ENCODE measurements at regions of chr20 and their contacts with region 1.

Region 1: DNA sequence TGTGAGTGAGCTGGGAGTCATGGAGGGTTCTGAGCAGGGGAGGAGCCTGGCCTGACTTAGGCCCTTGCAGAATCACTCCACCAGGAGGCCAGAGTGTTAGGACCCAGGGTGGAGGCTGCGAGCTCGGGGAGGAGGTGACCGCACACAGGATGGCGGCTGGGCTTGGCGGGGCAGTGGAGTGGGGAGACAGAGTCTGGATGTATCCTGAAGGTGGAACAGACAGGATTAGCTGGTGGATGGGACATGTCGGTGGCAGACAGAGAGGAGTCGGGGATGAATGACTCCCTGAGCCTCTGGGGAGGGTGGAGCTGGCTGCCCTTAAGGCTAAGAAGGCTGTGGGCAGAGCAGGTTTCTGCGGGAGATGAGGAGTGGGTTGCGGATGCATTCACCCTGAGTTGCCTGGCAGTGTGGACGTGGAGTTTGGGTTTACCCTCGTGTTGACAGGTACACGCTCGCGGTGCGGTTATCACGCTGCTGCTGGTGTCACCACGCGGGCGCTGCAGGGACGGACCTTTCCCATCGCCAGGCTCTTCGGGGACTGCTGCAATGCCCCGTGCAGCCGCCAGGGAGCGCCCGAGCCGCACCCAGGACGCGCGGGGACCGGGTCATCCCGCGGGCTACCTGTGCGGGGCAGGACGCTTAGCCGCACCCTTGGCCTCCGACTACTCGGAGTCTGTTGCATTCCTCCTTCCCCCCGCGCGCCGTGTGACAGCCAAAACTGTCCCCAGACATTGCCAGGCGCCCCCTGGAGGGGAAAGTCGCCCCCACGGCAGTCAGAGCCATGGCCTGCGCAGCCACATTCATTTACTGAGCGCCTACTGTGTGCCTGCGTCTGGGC is 43.0 kb upstream of the PTGIS start:
- DNase-seq: peak; percentile 73 to 90 (median 82)
- H3K4me3 ChIP-seq: no peak overlapping the region
- H3K27ac ChIP-seq: no peak overlapping the region
- H3K4me1 ChIP-seq: peaks cover 0 to 23% of the 10 kb centered on the region in 2 donors
- H3K27me3 ChIP-seq: no peaks in the 10 kb centered on the region
- CTCF ChIP-seq: peak; percentile 98 to 100 (median 100)
- POLR2A ChIP-seq: no peak

Region 2: GRCh38 chr20:49338061-49338460 is 272.9 kb before region 1 on chr20:
- intact Hi-C with region 1: loop called in 1 of 2 experiments (anchors 10 kb)
- DNase-seq: no peak
- H3K4me3 ChIP-seq: no peak overlapping the region
- H3K27ac ChIP-seq: no peak overlapping the region
- H3K4me1 ChIP-seq: no peaks in the 10 kb centered on the region
- H3K27me3 ChIP-seq: peaks cover 16% of the 10 kb centered on the region
- CTCF ChIP-seq: no peak
- POLR2A ChIP-seq: no peak

Region 3: GRCh38 chr20:49541733-49542513 is 69.0 kb before region 1 on chr20:
- intact Hi-C with region 1: loop called (anchors 2 kb)
- DNase-seq: peak; percentile 54 to 86 (median 67)
- H3K4me3 ChIP-seq: no peak overlapping the region
- H3K27ac ChIP-seq: no peak overlapping the region
- H3K4me1 ChIP-seq: no peaks in the 10 kb centered on the region
- H3K27me3 ChIP-seq: peaks cover 4% of the 10 kb centered on the region
- CTCF ChIP-seq: peak; percentile 64 to 98 (median 90)
- POLR2A ChIP-seq: no peak

Region 4: DNA sequence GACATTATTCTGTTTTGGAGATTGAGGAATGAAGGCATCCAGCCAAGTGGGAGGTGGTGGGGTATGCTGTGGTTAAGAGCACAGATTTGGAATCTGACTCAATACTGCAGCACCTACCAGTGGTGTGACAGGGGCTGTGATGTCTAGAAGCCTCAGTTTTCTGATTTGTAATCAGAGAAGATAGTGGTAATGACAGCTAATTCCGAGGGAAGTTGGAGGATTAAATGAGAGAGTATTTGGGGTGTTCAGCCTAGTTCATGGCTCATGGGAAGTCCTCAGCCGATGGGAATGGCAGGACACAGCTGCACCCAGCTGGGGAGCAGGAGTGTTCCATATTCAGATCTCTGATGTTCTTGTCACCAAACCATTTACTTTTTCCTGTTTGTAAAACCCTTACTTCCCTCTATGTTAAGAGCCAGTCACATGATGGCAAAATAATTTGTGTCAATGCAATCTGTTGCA is 211.0 kb after region 1 on chr20:
- intact Hi-C with region 1: no loop called
- DNase-seq: peak in 3 of 7 donors; percentile 35 to 54 (median 44)
- H3K4me3 ChIP-seq: no peak overlapping the region
- H3K27ac ChIP-seq: no peak overlapping the region
- H3K4me1 ChIP-seq: peaks cover 7 to 25% of the 10 kb centered on the region in 2 donors
- H3K27me3 ChIP-seq: no peaks in the 10 kb centered on the region
- CTCF ChIP-seq: peak in 1 of 6 experiments; percentile 22
- POLR2A ChIP-seq: no peak

Region 5: DNA sequence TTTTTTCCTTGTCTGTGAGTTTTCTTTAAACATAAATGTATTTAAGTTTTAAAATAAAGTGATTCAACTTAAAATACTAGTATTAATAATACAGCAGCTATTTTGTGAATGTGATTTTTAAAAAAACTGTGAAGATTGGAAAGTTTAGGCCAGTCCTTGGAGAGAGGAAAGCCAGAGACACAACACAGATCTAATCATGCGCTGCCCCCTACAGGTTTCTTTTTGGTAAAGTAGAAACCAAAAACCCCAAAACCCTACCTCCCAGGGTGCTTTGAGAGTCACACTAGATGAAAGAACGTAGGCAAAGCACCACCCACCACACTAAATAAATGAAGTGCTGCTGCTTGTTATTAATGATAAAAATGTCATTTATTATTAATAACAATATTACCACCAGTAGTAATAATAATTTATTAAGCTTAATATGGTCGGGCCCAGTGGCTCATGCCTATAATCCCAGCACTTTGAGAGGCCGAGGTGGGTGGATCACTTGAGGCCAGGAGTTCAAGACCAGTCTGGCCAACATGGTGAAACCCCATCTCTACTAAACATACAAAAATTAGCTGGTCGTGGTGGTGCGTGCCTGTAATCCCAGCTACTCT is 235.4 kb after region 1 on chr20:
- intact Hi-C with region 1: loop called (anchors 5 kb)
- DNase-seq: peak; percentile 56 to 79 (median 67)
- H3K4me3 ChIP-seq: no peak overlapping the region
- H3K27ac ChIP-seq: peak overlapping the region in 1 of 5 donors; percentile 17
- H3K4me1 ChIP-seq: peaks cover 0 to 13% of the 10 kb centered on the region in 2 donors
- H3K27me3 ChIP-seq: no peaks in the 10 kb centered on the region
- CTCF ChIP-seq: peak; percentile 26 to 73 (median 69)
- POLR2A ChIP-seq: no peak

Region 6: GRCh38 chr20:50095476-50096078 is 484.7 kb after region 1 on chr20:
- intact Hi-C with region 1: no loop called
- DNase-seq: no peak
- H3K4me3 ChIP-seq: no peak overlapping the region
- H3K27ac ChIP-seq: no peak overlapping the region
- H3K4me1 ChIP-seq: peaks cover 6 to 18% of the 10 kb centered on the region in 2 donors
- H3K27me3 ChIP-seq: no peaks in the 10 kb centered on the region
- CTCF ChIP-seq: no peak
- POLR2A ChIP-seq: no peak